Activated T-helper 1 cell treated with anti-CD3 and anti-CD28 coated beads, Interleukin-12 subunit alpha, Interleukin-12 subunit beta, Interleukin-2, Interleukin-4 antibody, amounts not matched to agents 30 ng/mL and 10 ng/mL and 1 ng/mL, durations not matched to agents 14 hours and 24 hours and 36 hours (primary cell): ENCODE measurements at regions of chr6 and their contacts with region 1.

Region 1: DNA sequence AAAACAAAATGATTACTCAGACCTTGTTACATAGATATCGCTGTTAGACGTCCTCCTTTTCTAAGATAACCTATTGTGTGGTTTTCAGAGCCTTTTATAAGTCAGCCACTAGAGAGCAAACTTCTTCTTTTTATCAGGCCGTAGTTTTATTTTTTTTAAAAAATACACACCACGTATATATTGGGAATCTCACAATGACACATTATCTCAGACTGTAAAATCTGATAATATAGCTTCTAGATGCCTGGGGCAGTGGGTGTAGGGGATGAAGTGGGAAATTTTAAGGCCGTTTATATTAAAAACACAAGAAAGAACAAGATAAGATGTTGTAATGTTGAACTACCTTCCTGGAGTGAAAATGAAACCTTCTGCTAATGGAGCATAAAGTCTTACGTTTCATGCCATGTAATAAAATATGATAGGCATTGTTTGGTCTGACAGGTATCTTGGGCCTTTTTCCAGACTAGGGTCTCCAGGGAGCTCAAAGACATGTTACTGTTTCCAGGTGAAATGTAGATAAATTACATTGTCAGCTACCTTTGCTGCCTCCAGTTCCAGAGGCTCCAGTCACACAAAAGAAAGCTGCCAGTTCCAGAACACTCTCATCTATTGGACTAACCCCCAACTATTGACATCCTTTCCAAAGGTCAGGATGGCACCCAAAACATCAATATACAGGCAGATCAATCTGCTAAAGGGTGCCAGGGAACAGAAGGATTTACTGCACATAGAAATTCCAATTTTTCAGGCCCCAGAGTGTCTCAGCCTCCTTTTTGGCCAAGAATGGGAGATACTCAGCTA is 130.2 kb upstream of the AKIRIN2 start:
- DNase-seq: no peak
- H3K4me3 Mint-ChIP-seq: peak overlapping the region; percentile 63
- H3K27ac Mint-ChIP-seq: no peak overlapping the region
- H3K4me1 Mint-ChIP-seq: peaks cover 14% of the 10 kb centered on the region
- H3K27me3 Mint-ChIP-seq: peaks cover 6% of the 10 kb centered on the region

Region 2: GRCh38 chr6:87139236-87139635 is 693.0 kb before region 1 on chr6:
- intact Hi-C with region 1: loop called (anchors 10 kb)
- DNase-seq: peak; percentile 14
- H3K4me3 Mint-ChIP-seq: no peak overlapping the region
- H3K27ac Mint-ChIP-seq: no peak overlapping the region
- H3K4me1 Mint-ChIP-seq: peaks cover 6% of the 10 kb centered on the region
- H3K27me3 Mint-ChIP-seq: peaks cover 49% of the 10 kb centered on the region